ENCODE measurements at regions of chr11 and their contacts with region 1.

Region 1: GRCh38 chr11:82972103-82972502 is 70.6 kb downstream of the DDIAS start:
- DNase-seq: no peak
- ATAC-seq: no peak
- H3K4me3 Mint-ChIP-seq: peak overlapping the region; percentile 83
- H3K27ac Mint-ChIP-seq: peak overlapping the region; percentile 81
- H3K4me1 Mint-ChIP-seq: peaks cover 18% of the 10 kb centered on the region
- H3K27me3 Mint-ChIP-seq: no peaks in the 10 kb centered on the region

Region 2: DNA sequence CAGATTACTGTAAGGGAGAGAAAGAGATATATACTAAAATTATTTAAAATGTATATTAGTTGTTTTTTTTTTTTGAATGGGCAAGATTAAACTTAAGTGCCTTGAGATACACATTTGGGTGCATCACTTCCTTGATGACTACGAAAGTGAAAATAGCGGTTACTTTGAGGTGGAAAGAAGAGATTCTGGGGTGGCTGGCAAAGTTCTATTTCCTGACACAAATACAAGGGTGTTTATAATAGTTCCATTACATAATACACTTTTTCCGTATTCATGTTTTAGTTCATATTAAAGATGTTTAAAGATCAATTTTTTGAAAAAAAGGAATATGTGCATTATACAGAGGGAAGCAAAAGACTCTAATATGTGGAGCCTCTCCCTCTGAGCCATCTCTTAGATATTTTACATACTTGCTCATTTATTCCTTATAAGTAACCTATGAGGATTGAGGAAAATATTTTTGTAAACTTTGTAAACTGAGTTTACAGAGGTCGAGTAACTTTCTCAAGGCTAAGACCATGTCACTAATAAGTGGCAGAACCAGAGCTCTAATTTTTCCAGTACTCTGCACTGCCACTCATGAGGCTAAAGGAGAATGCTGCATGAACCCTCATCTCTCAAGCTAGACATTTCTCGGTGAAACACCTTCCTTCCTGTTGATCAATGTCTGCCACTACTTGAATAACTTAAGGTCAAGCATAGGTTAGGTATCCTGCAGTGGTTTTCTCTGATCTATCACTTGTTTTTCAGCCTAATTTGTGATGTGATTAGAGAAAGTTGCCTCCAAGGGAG is 11.9 kb before region 1 on chr11:
- POLR2A ChIA-PET with region 1: interaction called, 13 read pairs
- DNase-seq: no peak
- ATAC-seq: peak; percentile 81
- H3K4me3 Mint-ChIP-seq: peak overlapping the region; percentile 76
- H3K27ac Mint-ChIP-seq: peak overlapping the region; percentile 82
- H3K4me1 Mint-ChIP-seq: peaks cover 59% of the 10 kb centered on the region
- H3K27me3 Mint-ChIP-seq: no peaks in the 10 kb centered on the region